A673 (cell line): ENCODE measurements at regions of chr9 and their contacts with region 1.

Region 1: GRCh38 chr9:95510709-95511615 is 5.8 kb downstream of the PTCH1 start:
- DNase-seq: peak; percentile 97
- H3K4me3 ChIP-seq: peak overlapping the region; percentile 84
- H3K27ac ChIP-seq: peak overlapping the region; percentile 91
- H3K4me1 ChIP-seq: peaks cover 44% of the 10 kb centered on the region
- H3K27me3 ChIP-seq: no peaks in the 10 kb centered on the region
- CTCF ChIP-seq: no peak

Region 2: DNA sequence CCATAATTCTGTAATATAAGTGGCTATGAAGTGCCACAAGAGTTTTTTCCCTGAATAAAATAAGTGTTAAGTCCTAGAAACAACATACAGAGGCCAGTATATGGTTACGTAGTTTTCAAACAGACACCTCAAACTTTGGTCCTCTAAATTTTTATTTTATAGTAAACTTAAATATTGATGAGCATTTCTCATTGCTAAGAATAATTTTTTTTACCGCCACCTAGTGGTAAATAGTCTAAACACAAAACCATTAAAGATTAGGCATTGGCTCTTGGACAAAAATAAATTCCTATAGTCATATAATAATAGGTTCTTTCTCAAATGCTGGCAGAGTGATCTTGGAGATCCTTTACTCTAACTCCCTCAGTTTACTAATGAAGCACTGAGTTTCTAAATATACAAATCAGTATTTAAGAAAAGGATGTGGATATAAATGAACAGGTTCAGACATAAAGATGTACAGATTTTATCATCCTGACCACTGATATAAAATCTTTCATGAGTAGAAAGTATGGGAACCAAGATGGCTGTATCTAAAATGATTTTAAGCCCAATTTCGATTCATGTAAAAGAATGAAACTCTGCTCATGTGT is 329.6 kb before region 1 on chr9:
- CTCF ChIA-PET with region 1: no interaction called
- POLR2A ChIA-PET with region 1: no interaction called
- intact Hi-C with region 1: no loop called
- DNase-seq: peak; percentile 49
- H3K4me3 ChIP-seq: no peak overlapping the region
- H3K27ac ChIP-seq: no peak overlapping the region
- H3K4me1 ChIP-seq: no peaks in the 10 kb centered on the region
- H3K27me3 ChIP-seq: no peaks in the 10 kb centered on the region
- CTCF ChIP-seq: peak; percentile 70

Region 3: GRCh38 chr9:95317119-95317892 is 193.7 kb before region 1 on chr9 and contains the start of gene FANCC:
- CTCF ChIA-PET with region 1: no interaction called
- POLR2A ChIA-PET with region 1: interaction called, 8 read pairs
- intact Hi-C with region 1: loop called (anchors 2 kb)
- DNase-seq: peak; percentile 98
- H3K4me3 ChIP-seq: peak within 1 kb of the TSS; percentile 79
- H3K27ac ChIP-seq: peak within 1 kb of the TSS; percentile 100
- H3K4me1 ChIP-seq: peaks cover 30% of the 10 kb centered on the region
- H3K27me3 ChIP-seq: no peaks in the 10 kb centered on the region
- CTCF ChIP-seq: no peak
- total RNA-seq, gene FANCC: 25.3 and 28.3 TPM in 2 replicates

Region 4: DNA sequence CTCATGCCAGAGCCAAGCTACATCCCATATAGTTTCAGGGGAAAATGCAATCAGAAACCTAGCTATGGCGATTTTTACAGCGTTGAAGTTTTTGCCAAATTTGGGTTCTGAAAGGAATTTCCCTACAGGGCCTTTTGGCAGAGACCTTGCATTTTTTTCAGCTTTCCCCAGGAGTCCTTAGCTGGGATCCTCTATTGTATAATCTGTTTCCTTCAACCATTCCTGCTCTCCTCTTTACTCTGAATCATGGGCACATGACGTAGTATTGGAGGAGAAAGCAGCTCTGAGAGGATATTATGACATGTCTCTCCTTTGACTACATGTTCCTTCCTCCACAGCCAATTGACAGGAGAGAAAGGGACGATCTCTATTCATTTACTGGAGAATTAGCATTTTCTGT is 246.0 kb after region 1 on chr9:
- CTCF ChIA-PET with region 1: no interaction called
- POLR2A ChIA-PET with region 1: no interaction called
- intact Hi-C with region 1: loop called (anchors 10 kb)
- DNase-seq: peak; percentile 71
- H3K4me3 ChIP-seq: no peak overlapping the region
- H3K27ac ChIP-seq: peak overlapping the region; percentile 5
- H3K4me1 ChIP-seq: peaks cover 37% of the 10 kb centered on the region
- H3K27me3 ChIP-seq: no peaks in the 10 kb centered on the region
- CTCF ChIP-seq: no peak

Region 5: DNA sequence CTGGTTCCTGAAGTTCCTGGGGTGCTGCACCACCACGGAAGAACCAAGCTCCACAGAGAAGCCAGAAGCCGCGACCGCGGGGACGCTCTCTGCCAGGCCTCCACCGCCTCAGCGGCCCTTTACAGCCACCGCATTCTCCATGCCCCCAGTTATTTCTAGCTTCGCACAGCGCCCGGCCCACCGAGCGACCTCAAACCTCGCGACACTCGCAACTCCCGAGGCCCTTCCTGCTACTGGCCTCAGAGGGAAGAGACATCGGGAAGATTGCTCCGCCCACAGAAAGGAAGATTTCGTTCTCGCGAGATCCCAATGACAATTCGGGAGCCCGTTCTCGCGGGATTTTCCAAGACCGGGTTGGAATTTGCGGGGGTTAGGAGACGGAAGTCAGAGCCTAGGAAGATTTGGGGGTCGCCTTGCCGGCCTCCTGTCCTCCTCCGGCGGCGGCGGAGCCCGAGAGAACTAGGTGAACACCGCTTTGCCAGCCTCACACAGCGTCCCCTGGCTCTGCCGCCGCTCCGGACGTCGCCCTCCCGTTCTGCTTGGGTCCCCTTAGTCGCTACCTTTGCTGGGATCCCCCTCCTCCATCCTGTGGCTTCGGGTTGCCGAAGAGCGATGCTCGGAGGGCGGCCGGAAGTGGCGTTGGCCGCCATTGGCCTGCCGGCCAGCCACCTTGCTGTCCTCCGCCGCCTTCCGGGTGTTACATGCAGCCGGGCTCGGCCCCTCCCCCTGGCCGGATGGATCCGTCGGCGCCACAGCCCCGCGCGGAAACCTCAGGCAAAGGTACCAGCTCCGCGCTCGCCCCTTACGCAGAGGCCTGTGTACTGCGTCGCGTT is 364.6 kb after region 1 on chr9 and contains the start of gene ERCC6L2:
- CTCF ChIA-PET with region 1: no interaction called
- POLR2A ChIA-PET with region 1: no interaction called
- intact Hi-C with region 1: loop called (anchors 10 kb)
- DNase-seq: peak; percentile 99
- H3K4me3 ChIP-seq: no peak within 1 kb of the TSS
- H3K27ac ChIP-seq: no peak within 1 kb of the TSS
- H3K4me1 ChIP-seq: peaks cover 8% of the 10 kb centered on the region
- H3K27me3 ChIP-seq: no peaks in the 10 kb centered on the region
- CTCF ChIP-seq: no peak
- total RNA-seq, gene ERCC6L2: 43.5 and 51.2 TPM in 2 replicates

Region 6: GRCh38 chr9:95966306-95966705 is 455.3 kb after region 1 on chr9:
- CTCF ChIA-PET with region 1: no interaction called
- POLR2A ChIA-PET with region 1: no interaction called
- intact Hi-C with region 1: no loop called
- DNase-seq: no peak
- H3K4me3 ChIP-seq: no peak overlapping the region
- H3K27ac ChIP-seq: no peak overlapping the region
- H3K4me1 ChIP-seq: no peaks in the 10 kb centered on the region
- H3K27me3 ChIP-seq: no peaks in the 10 kb centered on the region
- CTCF ChIP-seq: no peak

Region 7: DNA sequence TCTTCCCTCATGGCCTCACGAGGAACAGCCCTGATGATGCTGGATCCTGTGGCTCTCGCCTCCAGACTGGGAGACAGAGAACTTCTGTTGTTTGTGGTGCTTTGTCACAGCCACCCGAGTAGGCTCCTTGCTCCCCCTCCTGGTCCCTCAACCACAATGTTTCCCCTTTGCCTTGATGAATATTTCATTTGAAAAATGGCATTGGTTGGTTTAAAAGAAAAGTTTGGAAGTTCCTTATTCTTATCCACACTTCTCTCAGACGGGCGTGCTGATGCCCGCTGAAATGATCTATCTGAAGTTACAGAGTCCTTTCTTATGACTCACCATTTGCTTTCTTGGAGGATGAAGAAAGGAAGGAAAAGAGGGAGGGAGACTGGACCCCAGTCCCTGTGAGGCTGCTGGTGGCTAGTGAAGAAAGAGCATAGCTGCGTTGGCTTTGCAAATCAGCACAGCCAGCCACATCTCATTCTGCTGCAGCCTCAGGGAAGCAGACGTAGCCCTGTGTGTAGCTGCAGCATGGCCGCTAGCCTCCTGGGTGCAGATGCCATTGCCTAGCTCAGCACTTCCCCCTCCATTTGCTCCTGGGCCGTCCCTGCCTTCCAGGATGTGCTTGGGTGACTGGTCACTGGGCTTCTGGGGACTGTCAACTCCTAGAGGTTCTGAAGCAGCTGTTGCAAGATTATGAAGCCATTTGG is 550.5 kb after region 1 on chr9:
- CTCF ChIA-PET with region 1: no interaction called
- POLR2A ChIA-PET with region 1: no interaction called
- intact Hi-C with region 1: loop called (anchors 10 kb)
- DNase-seq: peak; percentile 75
- H3K4me3 ChIP-seq: no peak overlapping the region
- H3K27ac ChIP-seq: no peak overlapping the region
- H3K4me1 ChIP-seq: no peaks in the 10 kb centered on the region
- H3K27me3 ChIP-seq: no peaks in the 10 kb centered on the region
- CTCF ChIP-seq: peak; percentile 70

Region 8: DNA sequence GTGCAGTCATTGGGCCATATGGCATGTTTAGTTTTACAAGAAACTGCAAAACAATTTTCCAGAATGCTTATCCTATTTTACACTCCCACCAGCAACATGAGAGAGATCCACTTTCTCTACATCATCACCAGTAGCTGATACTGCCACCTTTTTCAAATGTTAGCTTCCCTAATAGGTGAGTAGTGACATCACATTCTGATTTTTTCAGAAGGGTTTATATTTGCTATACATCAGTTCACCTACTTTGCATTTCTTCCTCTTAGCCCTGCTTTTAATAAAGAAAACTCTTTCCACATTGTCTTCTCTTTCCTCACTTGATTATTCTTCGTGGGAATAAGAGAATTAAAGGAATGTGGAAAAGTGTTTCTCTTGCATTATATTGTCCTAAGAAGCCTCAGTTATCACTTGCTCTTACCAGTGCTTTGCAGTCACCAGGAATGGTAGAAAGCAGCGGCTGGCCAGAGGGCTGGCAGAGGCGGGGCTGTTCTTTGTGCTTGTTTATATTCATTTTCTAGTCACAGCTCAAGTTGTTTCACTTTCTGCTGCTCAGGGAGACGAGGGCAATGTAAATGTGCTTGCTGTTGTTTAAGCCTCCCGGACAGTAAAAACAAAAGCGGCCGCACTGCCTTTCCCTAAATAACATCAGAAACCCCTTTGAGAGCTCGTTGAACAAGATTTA is 626.2 kb after region 1 on chr9:
- CTCF ChIA-PET with region 1: interaction called, 11 read pairs
- POLR2A ChIA-PET with region 1: no interaction called
- intact Hi-C with region 1: no loop called
- DNase-seq: no peak
- H3K4me3 ChIP-seq: no peak overlapping the region
- H3K27ac ChIP-seq: no peak overlapping the region
- H3K4me1 ChIP-seq: peaks cover 9% of the 10 kb centered on the region
- H3K27me3 ChIP-seq: no peaks in the 10 kb centered on the region
- CTCF ChIP-seq: no peak